ENCODE measurements at regions of chr1 and their contacts with region 1.

Region 1: DNA sequence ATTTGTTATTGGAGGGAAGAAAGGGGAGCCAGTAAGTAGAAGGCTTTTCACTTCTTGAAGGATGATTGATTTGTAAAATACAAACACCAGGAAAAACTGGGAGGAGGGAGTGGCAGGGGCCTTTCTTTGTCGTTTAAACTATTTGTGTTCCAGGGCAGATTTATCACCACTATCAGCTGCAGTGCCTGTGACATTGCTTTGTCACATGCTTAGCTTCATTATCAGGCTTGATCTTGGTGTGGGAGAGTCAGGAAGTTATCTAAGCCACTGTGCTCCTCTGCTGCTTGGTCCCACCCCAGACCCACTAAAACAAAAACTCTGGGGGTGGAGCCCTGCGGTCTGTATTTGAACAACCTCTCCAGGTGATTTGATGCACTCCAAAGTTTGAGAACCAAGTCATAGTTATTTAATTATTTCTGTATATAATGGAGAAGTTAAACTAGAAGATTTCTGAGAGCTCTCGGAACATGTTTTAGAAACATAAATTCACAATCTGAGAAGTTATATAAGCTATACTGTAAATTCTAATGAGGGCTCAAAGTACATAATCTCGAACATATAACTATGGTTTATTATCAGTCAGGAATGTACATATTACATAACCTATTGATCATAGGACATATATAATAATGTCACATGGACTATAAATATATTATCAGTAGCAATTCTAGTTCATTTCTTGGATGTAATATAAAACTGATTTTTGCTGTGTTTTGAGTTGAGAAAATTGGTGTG is 87.9 kb downstream of the CDC14A start:
- DNase-seq: no peak
- H3K4me3 ChIP-seq: no peak overlapping the region
- H3K27ac ChIP-seq: no peak overlapping the region
- H3K4me1 ChIP-seq: no peaks in the 10 kb centered on the region
- H3K27me3 ChIP-seq: no peaks in the 10 kb centered on the region
- CTCF ChIP-seq: no peak

Region 2: GRCh38 chr1:100183370-100183769 is 256.9 kb before region 1 on chr1:
- CTCF ChIA-PET with region 1: no interaction called
- POLR2A ChIA-PET with region 1: interaction called, 30 read pairs
- intact Hi-C with region 1: no loop called
- DNase-seq: no peak
- H3K4me3 ChIP-seq: no peak overlapping the region
- H3K27ac ChIP-seq: no peak overlapping the region
- H3K4me1 ChIP-seq: no peaks in the 10 kb centered on the region
- H3K27me3 ChIP-seq: no peaks in the 10 kb centered on the region
- CTCF ChIP-seq: no peak

Measured in PC-9 (cell line).